ENCODE measurements at regions of chr16 and their contacts with region 1.

Region 1: GRCh38 chr16:2963065-2963722 is 881 bp upstream of the KREMEN2 start:
- DNase-seq: no peak
- H3K4me3 Mint-ChIP-seq: peak overlapping the region; percentile 77
- H3K27ac Mint-ChIP-seq: no peak overlapping the region
- H3K4me1 Mint-ChIP-seq: peaks cover 5% of the 10 kb centered on the region
- H3K27me3 Mint-ChIP-seq: no peaks in the 10 kb centered on the region
- CTCF ChIP-seq: no peak

Region 2: GRCh38 chr16:2939968-2940367 is 23.2 kb before region 1 on chr16:
- CTCF ChIA-PET with region 1: interaction called, 10 read pairs
- POLR2A ChIA-PET with region 1: interaction called, 3 read pairs
- intact Hi-C with region 1: no loop called
- DNase-seq: no peak
- H3K4me3 Mint-ChIP-seq: no peak overlapping the region
- H3K27ac Mint-ChIP-seq: no peak overlapping the region
- H3K4me1 Mint-ChIP-seq: no peaks in the 10 kb centered on the region
- H3K27me3 Mint-ChIP-seq: no peaks in the 10 kb centered on the region
- CTCF ChIP-seq: no peak

Region 3: DNA sequence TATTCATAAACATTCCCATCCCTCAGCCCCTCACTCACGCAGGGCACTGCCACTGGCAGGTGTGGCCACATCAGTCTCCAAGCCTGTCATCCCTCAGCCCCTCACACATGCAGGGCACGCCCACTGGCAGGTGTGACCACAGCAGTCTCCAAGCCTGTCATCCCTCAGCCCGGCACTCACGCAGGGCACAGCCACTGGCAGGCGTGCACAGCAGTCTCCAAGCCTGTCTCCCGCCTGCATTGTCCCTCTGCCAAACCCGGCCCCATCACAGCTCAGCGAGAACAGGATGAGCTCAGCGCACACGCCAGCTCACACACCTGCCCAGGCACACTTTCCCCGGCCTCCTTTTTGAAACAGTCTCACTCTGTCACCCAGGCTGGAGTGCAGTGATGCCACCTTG is 10.5 kb before region 1 on chr16:
- CTCF ChIA-PET with region 1: interaction called, 27 read pairs
- POLR2A ChIA-PET with region 1: interaction called, 3 read pairs
- intact Hi-C with region 1: no loop called
- DNase-seq: no peak
- H3K4me3 Mint-ChIP-seq: no peak overlapping the region
- H3K27ac Mint-ChIP-seq: no peak overlapping the region
- H3K4me1 Mint-ChIP-seq: peaks cover 4% of the 10 kb centered on the region
- H3K27me3 Mint-ChIP-seq: peaks cover 10% of the 10 kb centered on the region
- CTCF ChIP-seq: no peak

Region 4: GRCh38 chr16:2990891-2991290 is 27.7 kb after region 1 on chr16:
- CTCF ChIA-PET with region 1: no interaction called
- POLR2A ChIA-PET with region 1: no interaction called
- intact Hi-C with region 1: no loop called
- DNase-seq: peak; percentile 56
- H3K4me3 Mint-ChIP-seq: no peak overlapping the region
- H3K27ac Mint-ChIP-seq: no peak overlapping the region
- H3K4me1 Mint-ChIP-seq: peaks cover 6% of the 10 kb centered on the region
- H3K27me3 Mint-ChIP-seq: no peaks in the 10 kb centered on the region
- CTCF ChIP-seq: no peak

Measured in MCF 10A (cell line).